Motor neuron (in vitro differentiated cells): ENCODE measurements at regions of chr7 and their contacts with region 1.

Region 1: GRCh38 chr7:127392566-127393367 is at the start of gene ZNF800:
- ATAC-seq: peak; percentile 81 to 94 (median 92)
- H3K4me3 ChIP-seq: peak within 1 kb of the TSS; percentile 76 to 97 (median 96)
- H3K27ac ChIP-seq: peak within 1 kb of the TSS; percentile 68 to 85
- H3K4me1 ChIP-seq: peaks cover 0 to 4% of the 10 kb centered on the region in 2 donors
- total RNA-seq, gene ZNF800: 13.7 to 32.1 (median 23.5) TPM

Region 2: GRCh38 chr7:127107601-127108007 is 285.2 kb before region 1 on chr7:
- in situ Hi-C with region 1: no loop called
- ATAC-seq: peak; percentile 24 to 95 (median 60)
- H3K4me3 ChIP-seq: no peak overlapping the region
- H3K27ac ChIP-seq: no peak overlapping the region
- H3K4me1 ChIP-seq: no peaks in the 10 kb centered on the region

Region 3: GRCh38 chr7:127629268-127629854 is 236.6 kb after region 1 on chr7:
- in situ Hi-C with region 1: loop called in 1 of 9 experiments (anchors 25 kb)
- ATAC-seq: peak in 5 of 8 experiments; percentile 38 to 83 (median 66)
- H3K4me3 ChIP-seq: no peak overlapping the region
- H3K27ac ChIP-seq: no peak overlapping the region
- H3K4me1 ChIP-seq: no peaks in the 10 kb centered on the region

Region 4: GRCh38 chr7:128108641-128109423 is 716.1 kb after region 1 on chr7:
- in situ Hi-C with region 1: no loop called
- ATAC-seq: no peak
- H3K4me3 ChIP-seq: no peak overlapping the region
- H3K27ac ChIP-seq: no peak overlapping the region
- H3K4me1 ChIP-seq: peaks cover 3 to 9% of the 10 kb centered on the region in 2 donors